Breast epithelium (tissue), 4 donors: ENCODE measurements at regions of chr18 and their contacts with region 1.

Region 1: GRCh38 chr18:33355263-33355662 is 85.3 kb downstream of the CCDC178 start:
- DNase-seq: no peak
- H3K4me3 ChIP-seq: no peak overlapping the region
- H3K27ac ChIP-seq: no peak overlapping the region
- H3K4me1 ChIP-seq: no peaks in the 10 kb centered on the region
- H3K27me3 ChIP-seq: no peaks in the 10 kb centered on the region
- CTCF ChIP-seq: no peak
- POLR2A ChIP-seq: no peak

Region 2: GRCh38 chr18:33051407-33051806 is 303.9 kb before region 1 on chr18:
- intact Hi-C with region 1: no loop called
- DNase-seq: peak in 1 of 2 donors; percentile 49
- H3K4me3 ChIP-seq: no peak overlapping the region
- H3K27ac ChIP-seq: no peak overlapping the region
- H3K4me1 ChIP-seq: no peaks in the 10 kb centered on the region
- H3K27me3 ChIP-seq: no peaks in the 10 kb centered on the region
- CTCF ChIP-seq: no peak
- POLR2A ChIP-seq: no peak

Region 3: GRCh38 chr18:33304277-33304676 is 51.0 kb before region 1 on chr18:
- intact Hi-C with region 1: loop called (anchors 2 kb)
- DNase-seq: no peak
- H3K4me3 ChIP-seq: no peak overlapping the region
- H3K27ac ChIP-seq: no peak overlapping the region
- H3K4me1 ChIP-seq: no peaks in the 10 kb centered on the region
- H3K27me3 ChIP-seq: no peaks in the 10 kb centered on the region
- CTCF ChIP-seq: no peak
- POLR2A ChIP-seq: no peak